Uterus (tissue), 4 donors: ENCODE measurements at regions of chr2 and their contacts with region 1.

Region 1: DNA sequence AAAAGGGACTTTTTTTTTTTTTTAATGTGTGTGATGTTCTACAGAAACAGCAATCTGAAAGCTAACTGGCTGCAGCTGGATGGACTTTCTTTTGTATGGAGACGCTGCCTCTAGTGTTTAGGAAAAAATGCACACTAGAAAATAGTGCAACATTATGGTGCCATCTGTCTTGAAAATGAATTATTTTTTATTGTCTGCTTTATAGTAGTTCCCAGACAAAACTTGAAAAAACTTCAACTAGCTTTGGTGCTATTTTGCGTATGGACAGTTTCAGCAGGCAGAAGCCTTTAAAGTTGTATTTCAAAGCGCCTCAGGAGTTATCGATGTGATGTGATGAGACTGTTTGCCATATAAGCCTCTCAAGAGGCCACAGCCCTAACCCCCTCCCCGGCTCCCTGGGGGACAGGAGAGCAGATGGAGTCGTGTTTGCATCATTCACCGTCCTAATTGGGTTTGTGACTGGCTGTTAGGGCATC is 86.9 kb downstream of the LTBP1 start:
- DNase-seq: peak in 1 of 2 donors; percentile 42
- H3K4me3 ChIP-seq: peak overlapping the region; percentile 30 to 37
- H3K27ac ChIP-seq: peak overlapping the region; percentile 66 to 81
- H3K4me1 ChIP-seq: no peaks in the 10 kb centered on the region
- H3K27me3 ChIP-seq: no peaks in the 10 kb centered on the region
- CTCF ChIP-seq: peak; percentile 66 to 79 (median 72)
- POLR2A ChIP-seq: no peak

Region 2: GRCh38 chr2:33583194-33583938 is 549.7 kb after region 1 on chr2:
- intact Hi-C with region 1: loop called (anchors 10 kb)
- DNase-seq: no peak
- H3K4me3 ChIP-seq: no peak overlapping the region
- H3K27ac ChIP-seq: peak overlapping the region in 1 of 2 donors; percentile 25
- H3K4me1 ChIP-seq: no peaks in the 10 kb centered on the region
- H3K27me3 ChIP-seq: no peaks in the 10 kb centered on the region
- CTCF ChIP-seq: peak; percentile 81 to 86 (median 84)
- POLR2A ChIP-seq: no peak